Ascending aorta (tissue), 2 donors: ENCODE measurements at regions of chr3 and their contacts with region 1.

Region 1: GRCh38 chr3:48556793-48557626 is at the start of gene PFKFB4:
- DNase-seq: peak; percentile 99 to 100
- H3K4me3 ChIP-seq: peak within 1 kb of the TSS; percentile 57 to 83
- H3K27ac ChIP-seq: peak within 1 kb of the TSS; percentile 44 to 84
- H3K4me1 ChIP-seq: peaks cover 15 to 34% of the 10 kb centered on the region in 2 donors
- H3K27me3 ChIP-seq: no peaks in the 10 kb centered on the region
- CTCF ChIP-seq: peak in 1 of 3 experiments; percentile 5
- total RNA-seq, gene PFKFB4: 3.7 TPM

Region 2: DNA sequence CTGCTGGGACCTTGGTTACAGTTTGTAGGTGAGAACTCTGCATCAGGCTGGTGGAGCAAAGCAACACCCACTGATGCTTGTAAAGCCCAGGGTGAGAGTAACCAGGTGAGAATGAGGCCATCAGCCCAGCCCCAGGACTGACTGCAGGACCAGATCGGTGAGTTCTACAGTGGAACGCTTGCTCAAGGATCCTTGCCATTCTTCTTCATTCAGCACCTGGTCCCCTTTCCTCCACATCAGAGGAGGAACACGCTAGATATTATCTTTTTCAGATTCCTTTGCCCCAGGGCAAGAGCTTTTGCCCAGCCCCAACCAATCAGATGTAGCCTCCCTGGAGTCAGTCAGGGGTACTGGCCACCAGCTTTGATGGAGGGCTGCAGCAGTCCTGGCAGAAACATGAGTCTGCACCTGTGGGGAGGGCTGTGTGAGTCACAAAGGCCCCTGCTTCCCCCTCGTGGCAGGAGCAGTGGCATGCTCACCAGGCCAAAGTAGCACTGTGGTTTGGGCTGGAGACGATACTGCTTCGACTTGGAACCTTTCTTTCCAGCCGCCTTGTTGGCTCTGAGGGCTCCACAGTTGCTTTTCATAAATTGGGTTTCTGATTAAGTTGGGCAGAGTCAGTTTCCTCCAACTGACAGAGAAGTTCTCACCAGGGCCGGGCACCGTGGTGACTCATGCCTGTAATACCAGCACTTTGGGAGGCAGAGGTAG is 49.5 kb before region 1 on chr3:
- intact Hi-C with region 1: loop called (anchors 2 kb)
- DNase-seq: peak; percentile 35 to 81
- H3K4me3 ChIP-seq: no peak overlapping the region
- H3K27ac ChIP-seq: peak overlapping the region; percentile 69 to 76
- H3K4me1 ChIP-seq: peaks cover 0 to 23% of the 10 kb centered on the region in 2 donors
- H3K27me3 ChIP-seq: no peaks in the 10 kb centered on the region
- CTCF ChIP-seq: peak; percentile 34 to 58 (median 52)

Region 3: DNA sequence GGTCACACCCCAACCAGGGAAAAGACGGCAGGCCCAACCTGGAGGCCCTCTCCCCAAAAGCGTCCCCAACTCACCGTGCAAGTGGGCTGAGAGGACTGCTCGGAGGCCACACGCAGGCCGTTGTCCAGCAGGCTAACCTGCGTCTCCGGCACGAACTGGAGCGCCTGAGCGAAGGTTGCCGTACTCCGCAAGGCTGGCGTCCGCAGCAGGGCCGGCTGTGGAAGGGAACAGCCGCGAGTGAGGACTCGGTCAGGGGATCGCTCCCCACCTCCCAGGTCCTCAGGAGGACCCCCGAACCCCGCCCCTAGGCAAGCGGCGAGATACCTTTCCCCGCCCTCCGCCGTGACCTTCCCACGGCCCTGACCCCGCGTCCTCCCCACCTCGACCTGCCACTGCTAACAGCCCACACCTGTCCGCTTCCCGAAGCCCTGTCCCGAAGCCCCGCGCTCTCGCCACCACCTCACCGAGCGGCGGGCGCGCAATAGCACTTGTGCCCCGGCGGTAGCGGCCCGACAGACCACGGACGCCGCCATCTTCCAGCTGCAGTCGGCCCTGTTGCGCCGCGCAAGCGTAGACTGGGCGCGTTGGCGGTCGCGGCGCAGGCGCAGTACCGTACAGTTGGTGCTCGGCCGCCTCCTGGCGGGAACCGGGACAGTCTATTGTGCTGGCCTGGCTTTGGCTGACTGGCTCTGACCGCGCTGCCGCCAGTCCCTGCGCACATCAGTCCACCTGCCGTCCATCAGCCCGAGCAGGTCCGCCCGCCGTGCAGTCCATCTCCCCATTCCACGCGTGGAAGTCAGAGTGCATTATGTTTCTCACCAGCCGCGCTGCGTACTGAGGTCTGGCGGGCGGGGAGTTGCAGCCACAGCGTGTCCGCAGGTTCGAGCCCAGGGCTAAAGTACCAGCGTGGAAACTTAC is 52.3 kb after region 1 on chr3 and contains the start of gene UQCRC1:
- intact Hi-C with region 1: loop called (anchors 2 kb)
- DNase-seq: peak; percentile 67 to 96
- H3K4me3 ChIP-seq: peak within 1 kb of the TSS; percentile 65 to 92
- H3K27ac ChIP-seq: peak within 1 kb of the TSS; percentile 80 to 84
- H3K4me1 ChIP-seq: peaks cover 5 to 15% of the 10 kb centered on the region in 2 donors
- H3K27me3 ChIP-seq: no peaks in the 10 kb centered on the region
- CTCF ChIP-seq: peak; percentile 81 to 95 (median 86)
- total RNA-seq, gene UQCRC1: 193 TPM

Region 4: GRCh38 chr3:48656061-48656840 is 99.2 kb after region 1 on chr3:
- intact Hi-C with region 1: loop called (anchors 2 kb)
- DNase-seq: peak; percentile 62 to 89
- H3K4me3 ChIP-seq: peak overlapping the region; percentile 70 to 77
- H3K27ac ChIP-seq: peak overlapping the region; percentile 68 to 89
- H3K4me1 ChIP-seq: peaks cover 8 to 19% of the 10 kb centered on the region in 2 donors
- H3K27me3 ChIP-seq: no peaks in the 10 kb centered on the region
- CTCF ChIP-seq: peak; percentile 50 to 83 (median 69)